ENCODE measurements at regions of chr14 and their contacts with region 1.

Region 1: GRCh38 chr14:23320774-23321571 is at the start of gene PABPN1:
- DNase-seq: peak; percentile 99
- H3K4me3 Mint-ChIP-seq: peak within 1 kb of the TSS; percentile 92
- H3K27ac Mint-ChIP-seq: peak within 1 kb of the TSS; percentile 90
- H3K4me1 Mint-ChIP-seq: peaks cover 23% of the 10 kb centered on the region
- H3K27me3 Mint-ChIP-seq: no peaks in the 10 kb centered on the region
- total RNA-seq, gene PABPN1: 198 to 209 TPM

Region 2: DNA sequence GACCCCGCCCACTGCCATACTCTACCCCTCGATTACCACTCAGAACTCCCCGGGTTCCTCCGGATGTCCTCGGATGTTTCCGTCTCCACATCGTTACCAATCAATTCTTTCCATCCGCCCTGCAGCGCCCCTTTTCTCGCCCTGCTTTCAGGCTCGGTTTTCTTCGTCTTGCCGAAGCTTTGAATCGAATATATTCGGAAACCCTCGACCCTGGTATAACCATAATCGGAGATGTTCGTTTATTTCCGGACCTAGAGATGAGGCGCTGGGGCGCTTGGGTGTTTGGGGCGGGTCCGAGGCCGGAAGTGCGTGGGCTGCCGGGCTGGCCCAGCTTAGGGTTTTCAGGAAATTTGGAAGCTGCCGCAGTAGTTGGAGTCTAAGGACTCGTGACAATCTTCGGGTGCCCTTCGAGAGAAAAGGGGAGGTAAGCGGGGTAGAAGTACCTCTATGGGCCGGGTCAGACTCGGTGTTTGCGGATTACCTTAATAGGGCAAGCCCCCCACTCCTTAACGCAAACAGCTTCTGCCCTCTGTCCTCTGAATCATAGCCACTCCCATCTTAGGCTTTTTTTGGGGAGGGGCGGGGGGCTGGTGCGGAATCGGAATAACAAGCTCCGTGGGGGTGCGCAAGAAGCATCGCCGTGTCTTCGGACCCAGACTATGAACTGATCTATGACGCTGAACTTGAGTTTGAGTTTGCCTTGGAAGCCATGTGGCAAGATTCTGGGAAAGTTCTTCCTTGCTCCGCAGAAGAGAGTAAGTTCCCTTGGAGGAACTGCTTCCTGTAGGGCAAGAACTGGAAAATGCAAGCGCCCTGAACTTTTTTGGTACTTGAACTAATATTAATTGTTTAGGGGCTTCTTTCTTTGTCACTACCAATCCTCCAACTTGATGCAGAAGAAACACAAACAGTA is 225.5 kb before region 1 on chr14 and contains the start of gene C14orf119:
- CTCF ChIA-PET with region 1: interaction called, 4 read pairs
- POLR2A ChIA-PET with region 1: interaction called, 17 read pairs
- intact Hi-C with region 1: loop called (anchors 1 kb)
- DNase-seq: peak; percentile 100
- H3K4me3 Mint-ChIP-seq: no peak within 1 kb of the TSS
- H3K27ac Mint-ChIP-seq: no peak within 1 kb of the TSS
- H3K4me1 Mint-ChIP-seq: peaks cover 40% of the 10 kb centered on the region
- H3K27me3 Mint-ChIP-seq: no peaks in the 10 kb centered on the region
- total RNA-seq, gene C14orf119: 58.0 to 62.8 TPM

Region 3: GRCh38 chr14:23286020-23286905 is 34.7 kb before region 1 on chr14 and contains the start of gene HOMEZ:
- CTCF ChIA-PET with region 1: interaction called, 16 read pairs
- POLR2A ChIA-PET with region 1: interaction called, 24 read pairs
- intact Hi-C with region 1: loop called (anchors 1 kb)
- DNase-seq: peak; percentile 99
- H3K4me3 Mint-ChIP-seq: peak within 1 kb of the TSS; percentile 89
- H3K27ac Mint-ChIP-seq: peak within 1 kb of the TSS; percentile 87
- H3K4me1 Mint-ChIP-seq: peaks cover 25% of the 10 kb centered on the region
- H3K27me3 Mint-ChIP-seq: no peaks in the 10 kb centered on the region
- total RNA-seq, gene HOMEZ: 12.3 to 13.0 TPM

Region 4: GRCh38 chr14:23294734-23295561 is 26.0 kb before region 1 on chr14:
- CTCF ChIA-PET with region 1: interaction called, 76 read pairs
- POLR2A ChIA-PET with region 1: interaction called, 4 read pairs
- intact Hi-C with region 1: no loop called
- DNase-seq: peak; percentile 62
- H3K4me3 Mint-ChIP-seq: no peak overlapping the region
- H3K27ac Mint-ChIP-seq: peak overlapping the region; percentile 29
- H3K4me1 Mint-ChIP-seq: peaks cover 21% of the 10 kb centered on the region
- H3K27me3 Mint-ChIP-seq: no peaks in the 10 kb centered on the region

Region 5: DNA sequence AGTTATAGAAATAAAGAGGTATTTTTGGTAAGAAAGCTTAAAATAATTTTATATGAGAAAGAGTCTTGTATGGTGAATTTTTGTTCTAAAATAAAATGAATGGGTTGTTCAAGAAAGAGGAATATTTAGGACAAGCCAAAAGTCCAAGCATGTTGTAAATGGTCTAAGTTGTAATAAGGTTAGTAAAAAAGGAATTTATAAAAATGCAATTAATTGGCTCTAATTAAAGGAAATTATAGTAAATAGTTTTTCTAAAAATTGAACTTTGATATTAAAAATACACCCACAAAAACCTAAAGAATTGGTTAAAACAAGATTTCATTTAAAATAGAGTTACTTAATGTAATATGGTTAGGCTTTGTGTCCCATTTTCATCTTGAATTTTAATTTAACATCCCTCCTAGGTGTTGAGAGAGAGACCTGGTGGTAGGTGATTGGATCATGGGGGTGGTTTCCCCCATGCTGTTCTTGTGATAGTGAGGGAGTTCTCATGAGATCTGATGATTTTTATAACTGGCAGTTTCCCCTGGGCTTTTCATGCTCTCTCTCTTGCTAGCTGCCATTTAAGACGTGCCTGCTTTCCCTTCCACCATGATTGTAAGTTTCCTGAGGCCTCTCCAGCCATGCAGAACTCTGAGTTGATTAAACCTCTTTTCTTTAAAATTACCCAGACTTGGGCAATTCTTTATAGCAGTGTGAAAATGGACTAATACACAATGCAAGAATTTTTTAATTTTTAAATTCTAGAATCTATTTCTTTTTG is 18.7 kb after region 1 on chr14:
- CTCF ChIA-PET with region 1: no interaction called
- POLR2A ChIA-PET with region 1: no interaction called
- intact Hi-C with region 1: no loop called
- DNase-seq: no peak
- H3K4me3 Mint-ChIP-seq: no peak overlapping the region
- H3K27ac Mint-ChIP-seq: no peak overlapping the region
- H3K4me1 Mint-ChIP-seq: no peaks in the 10 kb centered on the region
- H3K27me3 Mint-ChIP-seq: peaks cover 9% of the 10 kb centered on the region

Region 6: GRCh38 chr14:23469127-23469905 is 148.3 kb after region 1 on chr14 and contains the start of gene NGDN:
- CTCF ChIA-PET with region 1: interaction called, 7 read pairs
- POLR2A ChIA-PET with region 1: no interaction called
- intact Hi-C with region 1: loop called (anchors 1 kb)
- DNase-seq: peak; percentile 95
- H3K4me3 Mint-ChIP-seq: no peak within 1 kb of the TSS
- H3K27ac Mint-ChIP-seq: no peak within 1 kb of the TSS
- H3K4me1 Mint-ChIP-seq: peaks cover 6% of the 10 kb centered on the region
- H3K27me3 Mint-ChIP-seq: no peaks in the 10 kb centered on the region
- total RNA-seq, gene NGDN: 42.1 to 44.1 TPM

Measured in activated CD4-positive, alpha-beta memory T cell treated with anti-CD3 and anti-CD28 coated beads for 36 hours (primary cell).